Right ventricle myocardium superior (tissue), 1 donor: ENCODE measurements at regions of chr16 and their contacts with region 1.

Region 1: DNA sequence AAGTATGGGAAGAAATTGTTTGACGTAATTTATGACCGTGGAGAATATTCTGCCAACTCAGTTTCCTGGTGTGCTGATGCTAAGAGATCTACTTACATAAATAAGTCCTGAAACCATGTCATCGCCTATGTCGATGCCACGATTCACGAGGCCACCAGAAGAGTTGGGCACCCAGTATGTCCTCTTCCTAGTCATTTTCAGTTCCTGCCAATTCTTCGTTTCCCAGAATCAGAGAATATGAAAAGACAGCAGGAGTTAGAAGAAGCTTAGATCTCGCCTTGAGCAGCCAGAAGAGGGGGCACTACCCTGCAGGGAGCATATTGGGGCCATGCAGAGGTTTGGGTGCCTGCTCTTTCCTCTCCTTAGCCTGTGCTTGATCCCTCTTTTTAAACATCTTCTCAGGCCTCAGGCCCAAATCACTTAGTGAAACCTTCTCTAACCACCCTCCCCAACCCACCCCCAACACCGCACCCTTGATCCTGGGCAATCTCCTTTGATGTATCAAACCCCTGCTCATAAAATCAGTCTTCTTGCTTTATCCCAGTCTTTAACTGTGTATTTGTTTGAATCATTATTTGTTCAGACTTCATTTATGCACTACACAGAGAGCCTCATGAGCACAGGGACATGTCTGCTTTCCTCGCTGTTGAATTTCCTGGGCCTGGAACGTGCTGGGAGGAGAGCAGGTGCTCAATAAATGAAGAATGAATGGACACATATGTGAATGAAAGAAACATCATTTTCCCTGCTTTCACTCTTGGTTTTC is 12.2 kb upstream of the LONP2 start:
- DNase-seq: no peak
- ATAC-seq: peak; percentile 41

Region 2: DNA sequence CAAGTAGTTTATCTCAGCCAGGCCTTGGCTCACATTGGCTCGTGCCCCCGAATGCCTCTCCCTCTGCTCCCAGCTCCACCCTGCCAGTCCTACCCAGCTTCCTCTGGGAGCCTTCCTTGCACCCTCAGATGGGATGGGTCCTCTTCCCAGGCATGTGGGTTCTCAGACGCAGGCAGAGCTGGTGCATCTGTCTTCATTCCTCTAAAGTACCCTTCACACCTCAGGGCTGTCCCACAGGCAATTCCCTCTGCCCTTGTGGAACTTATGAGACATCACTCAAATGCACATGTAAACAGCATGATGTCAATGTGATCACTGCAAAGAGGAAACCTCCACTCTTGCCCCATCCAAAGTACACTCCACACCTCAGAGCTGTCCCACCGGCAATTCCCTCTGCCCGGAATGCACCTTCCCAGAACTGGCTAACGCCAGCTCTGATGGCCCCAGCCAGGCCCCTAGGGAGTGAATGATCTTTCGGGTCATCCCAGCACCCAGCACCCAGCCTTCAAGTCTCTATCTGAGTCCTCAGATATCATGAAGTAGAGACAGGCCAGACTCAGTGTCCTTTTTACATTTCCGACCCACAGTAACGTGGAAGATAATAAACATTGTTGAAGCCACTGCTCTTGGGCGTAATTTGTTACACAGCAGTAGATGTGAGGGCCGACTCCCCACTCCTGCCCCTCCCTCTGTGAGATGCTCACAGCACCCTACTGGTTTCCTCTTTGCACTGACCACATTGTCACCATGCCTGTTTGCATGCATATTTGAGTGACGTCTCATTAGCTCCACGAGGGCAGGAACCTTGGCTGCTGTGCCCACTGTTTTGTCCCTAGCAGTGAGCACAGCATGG is 292.7 kb after region 1 on chr16:
- intact Hi-C with region 1: no loop called
- DNase-seq: no peak
- ATAC-seq: no peak

Region 3: GRCh38 chr16:48576927-48577326 is 345.0 kb after region 1 on chr16:
- intact Hi-C with region 1: no loop called
- DNase-seq: no peak
- ATAC-seq: peak; percentile 34

Region 4: GRCh38 chr16:48632137-48632774 is 400.3 kb after region 1 on chr16:
- intact Hi-C with region 1: loop called (anchors 10 kb)
- DNase-seq: no peak
- ATAC-seq: no peak